Heart right ventricle (tissue), 16 donors: ENCODE measurements at regions of chr6 and their contacts with region 1.

Region 1: GRCh38 chr6:43758617-43759050 is 11.4 kb upstream of the VEGFA start:
- DNase-seq: no peak
- ATAC-seq: peak; percentile 39 to 75 (median 66)
- H3K4me3 ChIP-seq: no peak overlapping the region
- H3K27ac ChIP-seq: no peak overlapping the region
- H3K4me1 ChIP-seq: peaks cover 0 to 7% (median 0%) of the 10 kb centered on the region in 9 donors
- H3K27me3 ChIP-seq: no peaks in the 10 kb centered on the region
- CTCF ChIP-seq: peak; percentile 56 to 80 (median 72)

Region 2: GRCh38 chr6:43679057-43679456 is 79.6 kb before region 1 on chr6:
- intact Hi-C with region 1: no loop called
- DNase-seq: no peak
- ATAC-seq: no peak
- H3K4me3 ChIP-seq: no peak overlapping the region
- H3K27ac ChIP-seq: peak overlapping the region in 1 of 10 donors; percentile 72
- H3K4me1 ChIP-seq: peaks cover 3 to 64% (median 26%) of the 10 kb centered on the region in 9 donors
- H3K27me3 ChIP-seq: no peaks in the 10 kb centered on the region
- CTCF ChIP-seq: no peak

Region 3: GRCh38 chr6:43723737-43724295 is 34.8 kb before region 1 on chr6:
- intact Hi-C with region 1: loop called in 2 of 10 experiments (anchors 5 kb)
- DNase-seq: peak; percentile 60 to 65
- ATAC-seq: peak; percentile 71 to 87 (median 78)
- H3K4me3 ChIP-seq: no peak overlapping the region
- H3K27ac ChIP-seq: peak overlapping the region in 1 of 10 donors; percentile 26
- H3K4me1 ChIP-seq: peaks cover 0 to 28% (median 9%) of the 10 kb centered on the region in 9 donors
- H3K27me3 ChIP-seq: no peaks in the 10 kb centered on the region
- CTCF ChIP-seq: peak; percentile 41 to 77 (median 68)

Region 4: GRCh38 chr6:43779852-43780236 is 21.2 kb after region 1 on chr6:
- intact Hi-C with region 1: no loop called
- DNase-seq: no peak
- ATAC-seq: peak; percentile 8 to 43 (median 32)
- H3K4me3 ChIP-seq: no peak overlapping the region
- H3K27ac ChIP-seq: peak overlapping the region; percentile 14 to 64 (median 30)
- H3K4me1 ChIP-seq: peaks cover 29 to 90% (median 53%) of the 10 kb centered on the region in 9 donors
- H3K27me3 ChIP-seq: no peaks in the 10 kb centered on the region
- CTCF ChIP-seq: no peak